A549 (cell line): ENCODE measurements at regions of chr5 and their contacts with region 1.

Region 1: GRCh38 chr5:137328463-137328862 is 170.7 kb downstream of the SPOCK1 start:
- DNase-seq: no peak
- ATAC-seq: no peak
- H3K4me3 ChIP-seq: no peak overlapping the region
- H3K27ac ChIP-seq: no peak overlapping the region
- H3K4me1 ChIP-seq: no peaks in the 10 kb centered on the region
- CTCF ChIP-seq: no peak
- EP300 ChIP-seq: no peak
- POLR2A ChIP-seq: no peak
- RAD21 ChIP-seq: no peak

Region 2: DNA sequence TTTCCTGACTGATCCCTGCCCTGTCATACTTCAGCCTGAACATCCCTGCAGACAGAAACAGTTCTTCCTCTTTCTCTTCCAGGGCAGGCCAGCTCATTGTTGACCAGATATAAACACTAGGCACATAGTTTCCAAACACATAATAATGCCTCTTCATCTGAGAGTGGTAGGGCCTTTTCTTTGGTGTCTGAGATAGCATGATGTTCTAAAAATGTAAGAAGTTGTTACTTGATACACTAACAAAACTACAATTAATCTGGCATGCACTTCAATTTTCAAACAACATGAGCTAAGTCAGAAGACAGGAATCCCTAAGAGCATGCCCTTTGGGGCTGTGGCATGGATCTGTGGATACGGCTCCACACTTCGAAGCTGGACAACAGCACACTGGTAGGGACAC is 76.0 kb before region 1 on chr5:
- CTCF ChIA-PET with region 1: no interaction called
- POLR2A ChIA-PET with region 1: no interaction called
- DNase-seq: no peak
- ATAC-seq: no peak
- H3K4me3 ChIP-seq: no peak overlapping the region
- H3K27ac ChIP-seq: no peak overlapping the region
- H3K4me1 ChIP-seq: no peaks in the 10 kb centered on the region
- CTCF ChIP-seq: no peak
- EP300 ChIP-seq: no peak
- POLR2A ChIP-seq: no peak
- RAD21 ChIP-seq: no peak

Region 3: DNA sequence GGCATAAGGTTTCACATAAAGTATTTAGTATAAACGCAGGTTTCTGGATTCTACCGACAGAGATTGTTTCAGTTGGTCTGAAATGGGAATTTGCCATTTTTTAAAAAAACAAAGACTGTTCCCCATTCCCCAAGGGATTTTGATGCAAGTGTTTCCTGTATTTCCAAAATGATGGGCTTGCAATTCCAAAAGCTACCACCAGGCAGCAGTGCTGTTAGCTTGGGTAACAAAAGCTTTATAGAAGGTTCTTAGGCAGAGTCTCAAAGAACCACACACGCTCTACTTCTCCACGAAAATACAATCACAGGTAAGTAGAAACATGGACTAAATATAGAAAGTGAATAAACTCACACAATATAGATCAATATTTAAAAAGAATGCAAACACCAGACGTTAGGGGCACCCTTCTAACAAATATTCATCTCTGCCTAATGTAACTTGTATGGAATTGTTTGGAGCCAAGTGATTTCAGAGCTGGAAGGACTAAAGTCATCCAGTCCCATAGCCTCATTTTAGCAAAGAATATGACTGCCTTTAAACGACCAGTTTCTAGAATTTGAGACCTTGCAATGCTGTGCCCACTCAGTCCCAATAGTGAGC is 16.4 kb after region 1 on chr5:
- CTCF ChIA-PET with region 1: interaction called, 10 read pairs
- POLR2A ChIA-PET with region 1: no interaction called
- DNase-seq: peak; percentile 18 to 60
- ATAC-seq: peak in 1 of 2 experiments; percentile 73; a peak in 4 of 6 replicates
- H3K4me3 ChIP-seq: no peak overlapping the region
- H3K27ac ChIP-seq: no peak overlapping the region
- H3K4me1 ChIP-seq: no peaks in the 10 kb centered on the region
- CTCF ChIP-seq: peak; percentile 72
- EP300 ChIP-seq: no peak
- POLR2A ChIP-seq: no peak
- RAD21 ChIP-seq: peak; percentile 65 to 82

Region 4: DNA sequence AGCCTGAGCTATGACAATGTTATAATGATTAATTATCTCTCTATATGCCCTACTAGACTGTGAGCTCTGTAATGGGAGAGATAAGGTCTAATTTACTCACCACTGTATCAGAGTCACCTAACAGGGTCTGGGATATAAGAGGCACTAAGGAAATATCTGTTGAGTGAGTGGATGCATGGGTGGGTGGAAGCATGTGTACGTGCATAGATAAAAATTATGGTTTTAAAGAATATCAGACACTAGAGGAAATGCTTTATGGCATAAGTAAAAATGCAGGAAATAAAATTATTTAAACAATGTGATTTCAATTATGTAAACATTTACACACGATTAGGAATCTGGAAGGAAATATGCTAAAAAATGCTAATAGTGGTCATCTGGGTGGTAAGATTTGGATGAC is 32.8 kb after region 1 on chr5:
- CTCF ChIA-PET with region 1: no interaction called
- POLR2A ChIA-PET with region 1: no interaction called
- DNase-seq: no peak
- ATAC-seq: no peak
- H3K4me3 ChIP-seq: no peak overlapping the region
- H3K27ac ChIP-seq: no peak overlapping the region
- H3K4me1 ChIP-seq: peaks cover 4% of the 10 kb centered on the region; the same call in 1 of the 3 replicates
- CTCF ChIP-seq: no peak
- EP300 ChIP-seq: no peak
- POLR2A ChIP-seq: no peak
- RAD21 ChIP-seq: no peak